ENCODE measurements at regions of chr1 and their contacts with region 1.

Region 1: GRCh38 chr1:67274623-67275325 is 32.9 kb upstream of the IL12RB2 start:
- DNase-seq: peak; percentile 55
- H3K4me3 Mint-ChIP-seq: no peak overlapping the region
- H3K27ac Mint-ChIP-seq: peak overlapping the region; percentile 90
- H3K4me1 Mint-ChIP-seq: peaks cover 55% of the 10 kb centered on the region
- H3K27me3 Mint-ChIP-seq: no peaks in the 10 kb centered on the region

Region 2: DNA sequence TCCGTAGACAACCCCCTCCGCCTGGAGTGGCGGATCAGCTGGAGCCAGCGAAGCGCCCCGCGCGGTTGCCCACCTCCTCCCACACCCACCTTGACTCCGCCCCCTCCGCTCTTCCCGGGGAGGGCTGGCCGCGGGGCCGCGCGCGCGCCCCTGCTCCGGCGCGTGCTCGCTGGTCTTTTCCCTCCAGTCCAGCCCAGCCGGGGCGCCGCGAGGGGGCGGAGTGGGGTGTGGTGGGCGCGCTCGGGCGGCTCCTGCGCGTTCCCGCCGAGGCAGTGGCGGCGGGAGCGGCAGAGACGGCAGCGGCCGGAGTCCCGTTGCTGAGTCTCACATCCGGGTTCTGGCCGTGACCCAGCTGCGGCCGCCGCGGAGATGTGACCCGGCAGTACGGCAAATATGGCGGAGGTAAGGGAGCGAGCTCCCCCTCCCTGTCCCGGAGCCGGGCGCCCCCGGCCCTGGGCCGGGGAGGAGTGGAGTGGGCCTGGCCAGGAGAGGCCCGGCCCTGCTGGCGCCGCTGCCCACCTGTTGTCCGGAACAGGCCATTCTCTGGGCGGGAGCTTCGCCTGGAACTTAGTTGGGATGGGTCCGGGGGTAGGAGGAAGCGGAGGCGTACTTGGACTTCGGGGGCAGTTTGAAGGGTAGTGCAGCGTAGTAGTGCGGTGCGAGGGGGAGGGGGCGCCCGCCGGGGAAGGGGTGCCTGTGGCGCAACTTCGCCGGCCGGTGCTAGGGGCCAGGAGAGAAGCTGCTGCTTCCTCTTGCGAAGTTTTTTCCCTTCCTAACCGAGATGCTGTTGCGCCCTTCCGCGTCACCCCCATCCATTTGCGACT is 344.6 kb before region 1 on chr1:
- CTCF ChIA-PET with region 1: no interaction called
- intact Hi-C with region 1: loop called (anchors 5 kb)
- DNase-seq: peak; percentile 92
- H3K4me3 Mint-ChIP-seq: peak overlapping the region; percentile 84
- H3K27ac Mint-ChIP-seq: peak overlapping the region; percentile 92
- H3K4me1 Mint-ChIP-seq: peaks cover 51% of the 10 kb centered on the region
- H3K27me3 Mint-ChIP-seq: no peaks in the 10 kb centered on the region

Region 3: GRCh38 chr1:67110352-67110751 is 164.4 kb before region 1 on chr1:
- CTCF ChIA-PET with region 1: no interaction called
- intact Hi-C with region 1: no loop called
- DNase-seq: no peak
- H3K4me3 Mint-ChIP-seq: no peak overlapping the region
- H3K27ac Mint-ChIP-seq: no peak overlapping the region
- H3K4me1 Mint-ChIP-seq: no peaks in the 10 kb centered on the region
- H3K27me3 Mint-ChIP-seq: no peaks in the 10 kb centered on the region

Region 4: DNA sequence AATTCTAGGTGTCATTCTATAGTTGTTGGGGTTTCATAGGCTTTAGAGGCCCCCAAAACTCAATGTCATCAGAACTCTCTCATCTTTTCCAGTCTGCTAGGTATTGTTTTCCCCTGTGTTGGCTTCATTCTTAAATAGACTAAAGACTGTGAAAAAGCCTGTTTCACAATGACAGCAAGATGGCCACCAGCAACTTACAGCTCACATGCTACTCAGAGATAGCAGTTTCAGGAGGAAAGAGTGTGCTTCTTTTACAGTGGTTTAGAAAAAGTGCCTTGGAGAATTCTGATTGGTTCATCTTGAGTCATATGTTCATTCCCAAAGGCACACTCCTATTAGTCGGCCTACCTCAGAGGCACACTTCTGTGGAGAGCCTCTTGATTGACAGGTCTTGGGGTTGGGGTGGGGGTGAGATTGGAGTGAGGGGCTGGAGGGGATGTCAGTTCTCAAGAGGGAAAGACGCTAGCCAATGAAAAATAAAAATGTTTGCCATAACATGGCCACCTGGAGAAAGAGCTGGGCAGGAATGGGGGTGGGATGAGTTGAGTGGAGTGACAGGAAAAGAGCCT is 100.0 kb before region 1 on chr1:
- CTCF ChIA-PET with region 1: no interaction called
- intact Hi-C with region 1: loop called (anchors 1 kb)
- DNase-seq: peak; percentile 63
- H3K4me3 Mint-ChIP-seq: peak overlapping the region; percentile 7
- H3K27ac Mint-ChIP-seq: peak overlapping the region; percentile 99
- H3K4me1 Mint-ChIP-seq: peaks cover 81% of the 10 kb centered on the region
- H3K27me3 Mint-ChIP-seq: no peaks in the 10 kb centered on the region

Region 5: GRCh38 chr1:67261680-67262079 is 13.1 kb before region 1 on chr1:
- CTCF ChIA-PET with region 1: interaction called, 3 read pairs
- intact Hi-C with region 1: loop called (anchors 1 kb)
- DNase-seq: peak; percentile 68
- H3K4me3 Mint-ChIP-seq: no peak overlapping the region
- H3K27ac Mint-ChIP-seq: no peak overlapping the region
- H3K4me1 Mint-ChIP-seq: peaks cover 26% of the 10 kb centered on the region
- H3K27me3 Mint-ChIP-seq: no peaks in the 10 kb centered on the region

Region 6: DNA sequence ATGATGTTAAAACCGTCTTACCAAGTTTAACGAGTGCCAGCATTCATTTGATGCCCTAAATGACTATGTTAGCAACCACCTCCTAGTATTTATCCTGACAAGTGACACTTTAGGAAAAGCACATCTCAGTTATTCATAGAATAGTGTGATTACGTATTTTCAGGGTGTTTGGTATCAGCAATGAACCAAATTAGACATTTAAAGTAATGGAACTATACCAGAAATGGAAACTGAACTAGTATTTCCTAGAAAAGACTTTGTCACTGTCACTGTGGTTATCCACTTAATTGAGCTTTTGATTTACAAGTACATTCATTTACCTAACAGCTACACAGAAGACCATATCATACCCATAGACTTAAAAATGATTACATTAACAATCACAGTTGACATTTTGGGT is 29.2 kb after region 1 on chr1:
- CTCF ChIA-PET with region 1: interaction called, 5 read pairs
- intact Hi-C with region 1: loop called (anchors 1 kb)
- DNase-seq: no peak
- H3K4me3 Mint-ChIP-seq: no peak overlapping the region
- H3K27ac Mint-ChIP-seq: peak overlapping the region; percentile 86
- H3K4me1 Mint-ChIP-seq: peaks cover 23% of the 10 kb centered on the region
- H3K27me3 Mint-ChIP-seq: no peaks in the 10 kb centered on the region

Region 7: DNA sequence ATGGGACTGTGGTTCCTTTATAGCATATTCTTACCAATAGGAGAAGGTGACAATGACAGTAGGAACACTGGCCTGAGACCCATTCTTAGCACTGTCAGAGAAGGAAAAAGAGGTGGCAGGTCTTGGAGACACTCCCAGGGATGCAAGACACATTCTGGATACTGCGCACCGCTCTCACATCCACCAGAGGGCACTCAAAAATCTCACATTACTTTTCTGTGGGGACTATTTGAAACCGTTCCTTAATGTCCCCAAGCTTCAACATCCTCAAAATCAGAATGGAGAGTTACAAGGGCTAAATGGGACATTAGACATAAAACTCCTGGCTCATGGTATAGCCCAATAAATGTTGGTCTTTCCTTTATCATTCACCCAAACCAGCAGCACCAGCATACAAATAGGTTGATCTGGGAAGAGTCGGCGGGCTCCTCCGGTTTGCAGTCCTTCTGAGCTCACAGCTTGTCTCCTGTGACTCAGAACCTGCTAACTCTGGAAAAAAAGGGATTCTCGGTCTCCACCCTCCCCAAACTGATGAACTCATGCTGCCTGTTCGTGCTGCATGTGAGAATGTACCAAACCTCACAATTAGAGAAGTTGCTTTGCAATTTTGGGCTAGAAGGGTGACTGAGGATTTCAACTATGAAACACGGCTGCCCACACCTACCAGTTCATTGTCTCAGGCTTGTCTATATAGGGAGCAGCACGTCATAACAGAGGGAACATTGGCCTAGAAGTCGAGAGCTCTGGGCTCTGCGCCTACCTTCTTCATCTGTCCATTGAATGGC is 73.1 kb after region 1 on chr1:
- CTCF ChIA-PET with region 1: no interaction called
- intact Hi-C with region 1: no loop called
- DNase-seq: peak; percentile 48
- H3K4me3 Mint-ChIP-seq: no peak overlapping the region
- H3K27ac Mint-ChIP-seq: peak overlapping the region; percentile 10
- H3K4me1 Mint-ChIP-seq: peaks cover 31% of the 10 kb centered on the region
- H3K27me3 Mint-ChIP-seq: no peaks in the 10 kb centered on the region

Region 8: GRCh38 chr1:67430352-67431155 is 155.8 kb after region 1 on chr1 and contains the start of gene SERBP1:
- CTCF ChIA-PET with region 1: no interaction called
- intact Hi-C with region 1: loop called (anchors 1 kb)
- DNase-seq: peak; percentile 97
- H3K4me3 Mint-ChIP-seq: peak within 1 kb of the TSS; percentile 97
- H3K27ac Mint-ChIP-seq: peak within 1 kb of the TSS; percentile 98
- H3K4me1 Mint-ChIP-seq: peaks cover 44% of the 10 kb centered on the region
- H3K27me3 Mint-ChIP-seq: no peaks in the 10 kb centered on the region
- total RNA-seq, gene SERBP1: 527 to 537 TPM

Measured in activated naive CD4-positive, alpha-beta T cell treated with anti-CD3 and anti-CD28 coated beads for 36 hours (primary cell).